ENCODE measurements at regions of chr5 and their contacts with region 1.

Region 1: GRCh38 chr5:91225848-91226686 is 157.1 kb downstream of the ARRDC3 start:
- DNase-seq: peak; percentile 13 to 77 (median 61)
- ATAC-seq: peak; percentile 63
- H3K4me3 ChIP-seq: no peak overlapping the region
- H3K4me3 Mint-ChIP-seq: no peak overlapping the region
- H3K27ac ChIP-seq: no peak overlapping the region
- H3K27ac Mint-ChIP-seq: no peak overlapping the region
- H3K4me1 ChIP-seq: no peaks in the 10 kb centered on the region
- H3K4me1 Mint-ChIP-seq: no peaks in the 10 kb centered on the region
- H3K27me3 ChIP-seq: no peaks in the 10 kb centered on the region
- H3K27me3 Mint-ChIP-seq: no peaks in the 10 kb centered on the region
- CTCF ChIP-seq: peak; percentile 53

Region 2: GRCh38 chr5:90843443-90843842 is 382.6 kb before region 1 on chr5:
- CTCF ChIA-PET with region 1: no interaction called
- POLR2A ChIA-PET with region 1: no interaction called
- intact Hi-C with region 1: no loop called
- DNase-seq: no peak
- ATAC-seq: no peak
- H3K4me3 ChIP-seq: no peak overlapping the region
- H3K4me3 Mint-ChIP-seq: no peak overlapping the region
- H3K27ac ChIP-seq: no peak overlapping the region
- H3K27ac Mint-ChIP-seq: no peak overlapping the region
- H3K4me1 ChIP-seq: no peaks in the 10 kb centered on the region
- H3K4me1 Mint-ChIP-seq: peaks cover 3% of the 10 kb centered on the region
- H3K27me3 ChIP-seq: peaks cover 0 to 2% of the 10 kb centered on the region in 2 experiments
- H3K27me3 Mint-ChIP-seq: peaks cover 21% of the 10 kb centered on the region
- CTCF ChIP-seq: no peak

Region 3: DNA sequence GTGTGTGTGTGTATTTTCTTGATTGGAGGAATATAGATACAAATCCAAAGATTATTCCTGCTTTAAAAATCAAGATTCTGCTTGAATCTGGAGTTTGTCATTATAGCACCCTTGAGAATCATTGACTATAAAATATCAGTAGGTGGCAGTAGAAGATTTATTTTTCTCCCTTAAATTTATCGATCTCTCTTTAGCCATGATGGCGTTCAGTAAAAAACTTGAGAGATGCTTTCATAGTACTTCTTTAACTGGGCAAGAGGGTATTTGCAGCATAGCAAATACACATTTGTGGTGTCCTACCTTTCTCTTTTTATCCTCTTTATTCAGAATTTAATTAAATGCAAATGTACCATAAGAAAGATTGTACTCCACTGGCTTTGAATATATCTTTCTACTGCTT is 359.7 kb before region 1 on chr5:
- CTCF ChIA-PET with region 1: interaction called, 4 read pairs
- POLR2A ChIA-PET with region 1: no interaction called
- intact Hi-C with region 1: loop called (anchors 1 to 5 kb)
- DNase-seq: peak in 2 of 9 experiments; percentile 39 to 52
- ATAC-seq: no peak
- H3K4me3 ChIP-seq: no peak overlapping the region
- H3K4me3 Mint-ChIP-seq: no peak overlapping the region
- H3K27ac ChIP-seq: no peak overlapping the region
- H3K27ac Mint-ChIP-seq: no peak overlapping the region
- H3K4me1 ChIP-seq: peaks cover 4% of the 10 kb centered on the region
- H3K4me1 Mint-ChIP-seq: peaks cover 11% of the 10 kb centered on the region
- H3K27me3 ChIP-seq: no peaks in the 10 kb centered on the region
- H3K27me3 Mint-ChIP-seq: peaks cover 2% of the 10 kb centered on the region
- CTCF ChIP-seq: peak; percentile 49

Region 4: GRCh38 chr5:91101600-91102379 is 124.3 kb before region 1 on chr5:
- CTCF ChIA-PET with region 1: no interaction called
- POLR2A ChIA-PET with region 1: no interaction called
- intact Hi-C with region 1: loop called in 1 of 2 experiments (anchors 5 kb)
- DNase-seq: peak in 8 of 9 experiments; percentile 14 to 71 (median 46)
- ATAC-seq: peak; percentile 84
- H3K4me3 ChIP-seq: no peak overlapping the region
- H3K4me3 Mint-ChIP-seq: no peak overlapping the region
- H3K27ac ChIP-seq: no peak overlapping the region
- H3K27ac Mint-ChIP-seq: no peak overlapping the region
- H3K4me1 ChIP-seq: no peaks in the 10 kb centered on the region
- H3K4me1 Mint-ChIP-seq: no peaks in the 10 kb centered on the region
- H3K27me3 ChIP-seq: no peaks in the 10 kb centered on the region
- H3K27me3 Mint-ChIP-seq: no peaks in the 10 kb centered on the region
- CTCF ChIP-seq: no peak

Region 5: GRCh38 chr5:91280362-91281269 is 54.5 kb after region 1 on chr5:
- CTCF ChIA-PET with region 1: interaction called, 3 read pairs
- POLR2A ChIA-PET with region 1: interaction called, 5 read pairs
- intact Hi-C with region 1: loop called in 1 of 2 experiments (anchors 5 kb)
- DNase-seq: peak; percentile 53 to 95 (median 85)
- ATAC-seq: peak; percentile 84
- H3K4me3 ChIP-seq: peak overlapping the region; percentile 58 to 79
- H3K4me3 Mint-ChIP-seq: peak overlapping the region; percentile 84
- H3K27ac ChIP-seq: peak overlapping the region; percentile 16 to 28
- H3K27ac Mint-ChIP-seq: peak overlapping the region; percentile 84
- H3K4me1 ChIP-seq: peaks cover 8% of the 10 kb centered on the region
- H3K4me1 Mint-ChIP-seq: peaks cover 26% of the 10 kb centered on the region
- H3K27me3 ChIP-seq: no peaks in the 10 kb centered on the region
- H3K27me3 Mint-ChIP-seq: no peaks in the 10 kb centered on the region
- CTCF ChIP-seq: no peak

Region 6: DNA sequence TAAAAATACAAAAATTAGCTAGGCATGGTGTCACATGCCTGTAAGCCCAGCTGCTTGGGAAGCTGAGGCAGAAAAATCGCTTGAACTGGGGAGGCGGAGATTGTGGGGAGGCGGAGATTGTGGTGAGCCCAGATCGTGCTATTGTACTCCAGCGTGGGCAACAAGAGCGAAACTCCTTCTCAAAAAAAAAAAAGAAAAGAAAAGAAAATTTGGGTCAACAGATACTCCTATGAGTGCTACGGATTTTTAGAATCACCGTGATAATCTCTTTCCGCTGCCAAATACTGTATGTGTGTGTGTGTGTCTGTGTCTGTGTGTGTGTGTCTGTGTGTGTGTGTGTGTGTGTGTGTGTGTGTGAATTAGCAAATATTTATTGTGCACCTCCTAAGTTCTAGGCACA is 92.7 kb after region 1 on chr5:
- CTCF ChIA-PET with region 1: interaction called, 3 read pairs
- POLR2A ChIA-PET with region 1: no interaction called
- intact Hi-C with region 1: loop called (anchors 2 to 5 kb)
- DNase-seq: peak in 3 of 9 experiments; percentile 20 to 30 (median 24)
- ATAC-seq: no peak
- H3K4me3 ChIP-seq: no peak overlapping the region
- H3K4me3 Mint-ChIP-seq: no peak overlapping the region
- H3K27ac ChIP-seq: no peak overlapping the region
- H3K27ac Mint-ChIP-seq: no peak overlapping the region
- H3K4me1 ChIP-seq: peaks cover 10% of the 10 kb centered on the region
- H3K4me1 Mint-ChIP-seq: peaks cover 16% of the 10 kb centered on the region
- H3K27me3 ChIP-seq: no peaks in the 10 kb centered on the region
- H3K27me3 Mint-ChIP-seq: no peaks in the 10 kb centered on the region
- CTCF ChIP-seq: no peak